Esophagus squamous epithelium (tissue), 5 donors: ENCODE measurements at regions of chrX and their contacts with region 1.

Region 1: GRCh38 chrX:56804867-56805395 is 75.9 kb downstream of the NBDY start:
- DNase-seq: no peak
- H3K4me3 ChIP-seq: no peak overlapping the region
- H3K27ac ChIP-seq: peak overlapping the region in 2 of 4 donors; percentile 18 to 50
- H3K4me1 ChIP-seq: peaks cover 4 to 25% (median 10%) of the 10 kb centered on the region in 3 donors
- H3K27me3 ChIP-seq: no peaks in the 10 kb centered on the region
- CTCF ChIP-seq: no peak
- POLR2A ChIP-seq: no peak

Region 2: DNA sequence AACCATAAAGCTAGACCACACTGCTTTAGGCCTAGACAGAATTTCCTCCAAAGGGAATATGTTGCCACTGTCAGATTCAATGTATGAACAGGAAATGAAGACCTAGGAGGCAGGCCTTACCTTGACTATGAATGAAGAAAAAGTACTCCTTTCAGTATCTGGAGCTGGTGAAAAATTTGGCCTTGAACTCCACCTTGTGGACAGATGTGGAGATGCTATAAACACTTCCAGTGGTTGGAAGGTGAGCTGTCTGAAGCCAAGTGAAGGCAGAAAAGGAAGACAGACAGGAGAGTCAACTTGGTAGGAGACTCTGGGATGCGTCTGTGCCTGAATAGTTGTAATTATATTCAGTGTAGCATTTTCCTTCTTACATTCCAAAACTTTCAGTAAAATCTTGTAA is 173.2 kb after region 1 on chrX:
- intact Hi-C with region 1: loop called (anchors 5 kb)
- DNase-seq: no peak
- H3K4me3 ChIP-seq: no peak overlapping the region
- H3K27ac ChIP-seq: no peak overlapping the region
- H3K4me1 ChIP-seq: peaks cover 0 to 17% (median 0%) of the 10 kb centered on the region in 3 donors
- H3K27me3 ChIP-seq: no peaks in the 10 kb centered on the region
- CTCF ChIP-seq: peak in 5 of 6 experiments; percentile 62 to 66 (median 63)
- POLR2A ChIP-seq: no peak